Natural killer cell (primary cell): ENCODE measurements at regions of chr1 and their contacts with region 1.

Region 1: GRCh38 chr1:67332653-67333529 is 25.2 kb downstream of the IL12RB2 start:
- DNase-seq: peak in 1 of 2 donors; percentile 79
- ATAC-seq: peak; percentile 71 to 87 (median 85)
- H3K4me3 ChIP-seq: no peak overlapping the region
- H3K4me3 Mint-ChIP-seq: peak overlapping the region; percentile 71
- H3K27ac ChIP-seq: peak overlapping the region; percentile 84
- H3K27ac Mint-ChIP-seq: peak overlapping the region; percentile 82 to 85
- H3K4me1 ChIP-seq: peaks cover 50% of the 10 kb centered on the region
- H3K4me1 Mint-ChIP-seq: peaks cover 63 to 66% of the 10 kb centered on the region in 2 donors
- H3K27me3 ChIP-seq: no peaks in the 10 kb centered on the region
- H3K27me3 Mint-ChIP-seq: no peaks in the 10 kb centered on the region
- CTCF ChIP-seq: no peak

Region 2: GRCh38 chr1:66217021-66217420 is 1115.9 kb before region 1 on chr1:
- intact Hi-C with region 1: no loop called
- DNase-seq: no peak
- ATAC-seq: no peak
- H3K4me3 ChIP-seq: no peak overlapping the region
- H3K4me3 Mint-ChIP-seq: no peak overlapping the region
- H3K27ac ChIP-seq: no peak overlapping the region
- H3K27ac Mint-ChIP-seq: no peak overlapping the region
- H3K4me1 ChIP-seq: no peaks in the 10 kb centered on the region
- H3K4me1 Mint-ChIP-seq: peaks cover 0 to 6% of the 10 kb centered on the region in 2 donors
- H3K27me3 ChIP-seq: no peaks in the 10 kb centered on the region
- H3K27me3 Mint-ChIP-seq: peaks cover 3 to 8% of the 10 kb centered on the region in 2 donors
- CTCF ChIP-seq: no peak

Region 3: GRCh38 chr1:66676613-66677298 is 656.1 kb before region 1 on chr1:
- intact Hi-C with region 1: no loop called
- DNase-seq: no peak
- ATAC-seq: no peak
- H3K4me3 ChIP-seq: no peak overlapping the region
- H3K4me3 Mint-ChIP-seq: no peak overlapping the region
- H3K27ac ChIP-seq: no peak overlapping the region
- H3K27ac Mint-ChIP-seq: no peak overlapping the region
- H3K4me1 ChIP-seq: no peaks in the 10 kb centered on the region
- H3K4me1 Mint-ChIP-seq: no peaks in the 10 kb centered on the region
- H3K27me3 ChIP-seq: no peaks in the 10 kb centered on the region
- H3K27me3 Mint-ChIP-seq: no peaks in the 10 kb centered on the region
- CTCF ChIP-seq: no peak

Region 4: GRCh38 chr1:67194209-67194863 is 138.6 kb before region 1 on chr1:
- intact Hi-C with region 1: loop called (anchors 1 kb)
- DNase-seq: peak in 1 of 2 donors; percentile 74
- ATAC-seq: peak; percentile 73 to 80 (median 73)
- H3K4me3 ChIP-seq: no peak overlapping the region
- H3K4me3 Mint-ChIP-seq: peak overlapping the region; percentile 81
- H3K27ac ChIP-seq: peak overlapping the region; percentile 66
- H3K27ac Mint-ChIP-seq: no peak overlapping the region
- H3K4me1 ChIP-seq: peaks cover 24% of the 10 kb centered on the region
- H3K4me1 Mint-ChIP-seq: peaks cover 16 to 18% of the 10 kb centered on the region in 2 donors
- H3K27me3 ChIP-seq: no peaks in the 10 kb centered on the region
- H3K27me3 Mint-ChIP-seq: peaks cover 0 to 5% of the 10 kb centered on the region in 2 donors
- CTCF ChIP-seq: no peak

Region 5: DNA sequence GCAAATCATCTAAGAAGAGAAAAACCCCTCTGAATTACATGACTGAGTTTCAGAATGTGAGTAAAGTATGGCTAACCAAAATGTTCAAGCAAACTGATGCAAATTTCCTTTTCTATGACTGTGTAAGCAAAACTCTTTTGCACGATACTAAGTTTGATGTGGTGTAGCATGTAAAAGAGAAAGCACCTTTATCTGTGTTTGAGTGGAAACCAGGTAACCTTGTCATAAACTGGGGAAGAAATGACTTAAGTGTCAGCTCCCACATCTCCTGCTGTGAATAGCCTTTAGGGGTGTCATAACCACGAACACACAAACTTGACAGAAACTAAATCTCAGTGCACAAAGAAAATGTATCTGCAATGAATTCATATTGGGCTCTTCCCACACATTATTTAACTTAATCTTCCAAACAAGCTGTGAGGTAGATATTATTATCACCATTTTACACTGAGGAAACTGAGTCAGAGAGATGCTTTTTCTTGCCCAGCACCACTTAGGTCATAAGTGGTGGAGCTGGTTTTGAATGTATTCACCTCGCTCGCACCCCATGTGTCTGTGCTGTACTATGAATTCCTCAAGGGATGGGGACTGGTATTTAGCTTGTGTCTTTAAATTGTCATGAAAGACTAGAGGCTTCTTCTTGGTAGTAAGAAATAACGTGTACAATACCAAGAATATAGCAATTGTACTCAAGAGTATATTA is 58.1 kb before region 1 on chr1:
- intact Hi-C with region 1: loop called (anchors 1 kb)
- DNase-seq: peak in 1 of 2 donors; percentile 63
- ATAC-seq: peak; percentile 89 to 99 (median 89)
- H3K4me3 ChIP-seq: no peak overlapping the region
- H3K4me3 Mint-ChIP-seq: peak overlapping the region; percentile 54
- H3K27ac ChIP-seq: peak overlapping the region; percentile 66
- H3K27ac Mint-ChIP-seq: peak overlapping the region; percentile 67 to 74
- H3K4me1 ChIP-seq: peaks cover 11% of the 10 kb centered on the region
- H3K4me1 Mint-ChIP-seq: peaks cover 35 to 36% of the 10 kb centered on the region in 2 donors
- H3K27me3 ChIP-seq: no peaks in the 10 kb centered on the region
- H3K27me3 Mint-ChIP-seq: no peaks in the 10 kb centered on the region
- CTCF ChIP-seq: no peak

Region 6: GRCh38 chr1:67285780-67286488 is 47.0 kb before region 1 on chr1:
- intact Hi-C with region 1: loop called (anchors 1 kb)
- DNase-seq: peak in 1 of 2 donors; percentile 23
- ATAC-seq: peak; percentile 75 to 97 (median 96)
- H3K4me3 ChIP-seq: no peak overlapping the region
- H3K4me3 Mint-ChIP-seq: peak overlapping the region; percentile 14
- H3K27ac ChIP-seq: no peak overlapping the region
- H3K27ac Mint-ChIP-seq: peak overlapping the region; percentile 70 to 79
- H3K4me1 ChIP-seq: no peaks in the 10 kb centered on the region
- H3K4me1 Mint-ChIP-seq: peaks cover 22 to 33% of the 10 kb centered on the region in 2 donors
- H3K27me3 ChIP-seq: no peaks in the 10 kb centered on the region
- H3K27me3 Mint-ChIP-seq: no peaks in the 10 kb centered on the region
- CTCF ChIP-seq: peak; percentile 37

Region 7: DNA sequence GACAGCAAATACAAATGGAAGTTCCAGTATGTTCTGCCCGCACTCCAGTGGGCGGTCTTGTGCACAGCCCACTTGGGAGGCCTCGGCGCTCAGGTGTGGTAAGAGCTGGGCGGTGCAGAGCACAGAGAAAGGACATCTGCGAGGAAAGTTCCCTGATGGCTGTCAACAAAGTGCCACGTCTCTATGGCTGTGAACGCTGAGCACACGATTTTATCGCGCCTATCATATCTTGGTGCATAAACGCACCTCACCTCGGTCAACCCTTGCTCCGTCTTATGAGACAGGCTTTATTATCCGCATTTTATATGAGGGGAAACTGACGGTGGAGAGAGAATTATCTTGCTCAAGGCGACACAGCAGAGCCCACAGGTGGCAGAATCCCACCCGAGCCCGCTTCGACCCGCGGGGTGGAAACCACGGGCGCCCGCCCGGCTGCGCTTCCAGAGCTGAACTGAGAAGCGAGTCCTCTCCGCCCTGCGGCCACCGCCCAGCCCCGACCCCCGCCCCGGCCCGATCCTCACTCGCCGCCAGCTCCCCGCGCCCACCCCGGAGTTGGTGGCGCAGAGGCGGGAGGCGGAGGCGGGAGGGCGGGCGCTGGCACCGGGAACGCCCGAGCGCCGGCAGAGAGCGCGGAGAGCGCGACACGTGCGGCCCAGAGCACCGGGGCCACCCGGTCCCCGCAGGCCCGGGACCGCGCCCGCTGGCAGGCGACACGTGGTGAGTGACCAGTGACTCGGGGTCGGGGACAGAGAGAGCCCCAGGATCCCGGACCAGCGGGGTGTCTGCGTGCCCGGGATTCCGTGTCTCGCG is 25.4 kb before region 1 on chr1 and contains the start of gene IL12RB2:
- intact Hi-C with region 1: loop called (anchors 2 kb)
- DNase-seq: peak; percentile 38 to 65
- ATAC-seq: peak; percentile 80 to 87 (median 81)
- H3K4me3 ChIP-seq: peak within 1 kb of the TSS; percentile 47
- H3K4me3 Mint-ChIP-seq: peak within 1 kb of the TSS; percentile 92
- H3K27ac ChIP-seq: peak within 1 kb of the TSS; percentile 62
- H3K27ac Mint-ChIP-seq: peak within 1 kb of the TSS; percentile 82 to 89
- H3K4me1 ChIP-seq: peaks cover 23% of the 10 kb centered on the region
- H3K4me1 Mint-ChIP-seq: peaks cover 34 to 49% of the 10 kb centered on the region in 2 donors
- H3K27me3 ChIP-seq: no peaks in the 10 kb centered on the region
- H3K27me3 Mint-ChIP-seq: no peaks in the 10 kb centered on the region
- CTCF ChIP-seq: no peak
- total RNA-seq, gene IL12RB2: 18.2 to 51.2 (median 24.8) TPM

Region 8: GRCh38 chr1:67314696-67315095 is 18.2 kb before region 1 on chr1:
- intact Hi-C with region 1: loop called (anchors 2 kb)
- DNase-seq: peak in 1 of 2 donors; percentile 27
- ATAC-seq: peak in 1 of 3 donors; percentile 46
- H3K4me3 ChIP-seq: no peak overlapping the region
- H3K4me3 Mint-ChIP-seq: no peak overlapping the region
- H3K27ac ChIP-seq: no peak overlapping the region
- H3K27ac Mint-ChIP-seq: no peak overlapping the region
- H3K4me1 ChIP-seq: peaks cover 25% of the 10 kb centered on the region
- H3K4me1 Mint-ChIP-seq: peaks cover 15 to 27% of the 10 kb centered on the region in 2 donors
- H3K27me3 ChIP-seq: no peaks in the 10 kb centered on the region
- H3K27me3 Mint-ChIP-seq: no peaks in the 10 kb centered on the region
- CTCF ChIP-seq: no peak